ENCODE measurements at regions of chr18 and their contacts with region 1.

Region 1: DNA sequence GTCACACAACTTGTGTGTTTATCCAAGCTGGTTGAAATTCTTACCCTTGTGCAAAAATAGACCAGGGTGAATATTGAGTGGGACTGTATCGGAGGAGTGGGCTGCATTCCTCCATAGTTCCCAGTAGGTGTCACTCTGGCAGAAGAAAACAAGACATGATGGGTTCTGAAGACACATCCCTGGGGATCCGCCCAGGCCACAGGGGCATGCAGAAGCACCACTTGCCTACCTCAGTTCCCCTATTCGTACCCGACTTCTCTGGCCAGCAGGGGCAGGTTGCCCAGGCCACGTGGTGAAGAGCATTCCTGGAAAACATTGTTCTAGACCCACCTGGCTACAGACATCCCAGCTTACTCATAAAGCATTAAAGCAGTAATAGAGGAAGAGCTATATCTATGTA is 168.2 kb downstream of the FAM210A start:
- DNase-seq: peak; percentile 60
- ATAC-seq: peak; percentile 86

Region 2: DNA sequence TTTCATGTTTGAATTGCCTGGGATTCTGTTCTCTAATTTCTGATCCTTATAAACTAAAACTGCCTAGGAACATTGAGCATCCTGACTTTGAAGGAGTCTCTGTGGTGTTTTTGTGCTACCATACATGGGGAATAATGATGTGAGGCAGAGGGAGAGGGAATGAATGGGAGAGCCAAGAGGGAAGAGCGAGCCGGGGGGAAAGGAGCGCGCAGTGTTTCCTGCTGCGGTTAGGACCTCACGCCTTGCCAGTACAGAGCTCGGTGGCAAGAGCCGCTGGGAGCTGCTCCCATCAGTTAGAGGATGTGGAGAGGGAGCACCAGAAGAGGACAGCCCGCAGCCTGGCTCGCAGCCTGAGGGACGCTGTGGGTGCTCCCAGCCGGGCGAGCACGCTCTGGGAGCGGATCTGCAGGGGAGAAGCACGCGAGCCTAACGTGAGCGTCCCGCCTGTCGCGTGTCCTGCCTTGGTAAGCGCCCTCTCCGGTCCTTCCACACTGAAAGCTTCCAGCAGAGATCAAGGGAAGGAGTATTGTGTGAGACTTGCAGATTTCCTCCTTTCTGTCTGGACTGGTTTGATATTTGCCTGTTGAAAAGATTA is 53.6 kb after region 1 on chr18:
- intact Hi-C with region 1: loop called (anchors 5 kb)
- DNase-seq: peak; percentile 81
- ATAC-seq: peak; percentile 87

Region 3: GRCh38 chr18:13629841-13630715 is 72.0 kb after region 1 on chr18:
- intact Hi-C with region 1: loop called (anchors 2 kb)
- DNase-seq: no peak
- ATAC-seq: peak; percentile 90